ENCODE measurements at regions of chr6 and their contacts with region 1.

Region 1: GRCh38 chr6:71698703-71699102 is 187.6 kb upstream of the RIMS1 start:
- DNase-seq: no peak
- H3K4me3 ChIP-seq: no peak overlapping the region
- H3K27ac ChIP-seq: no peak overlapping the region
- H3K4me1 ChIP-seq: no peaks in the 10 kb centered on the region
- H3K27me3 ChIP-seq: no peaks in the 10 kb centered on the region
- CTCF ChIP-seq: no peak
- POLR2A ChIP-seq: no peak

Region 2: GRCh38 chr6:71727632-71728294 is 29.1 kb after region 1 on chr6:
- intact Hi-C with region 1: no loop called
- DNase-seq: no peak
- H3K4me3 ChIP-seq: no peak overlapping the region
- H3K27ac ChIP-seq: no peak overlapping the region
- H3K4me1 ChIP-seq: no peaks in the 10 kb centered on the region
- H3K27me3 ChIP-seq: no peaks in the 10 kb centered on the region
- CTCF ChIP-seq: no peak
- POLR2A ChIP-seq: no peak

Region 3: DNA sequence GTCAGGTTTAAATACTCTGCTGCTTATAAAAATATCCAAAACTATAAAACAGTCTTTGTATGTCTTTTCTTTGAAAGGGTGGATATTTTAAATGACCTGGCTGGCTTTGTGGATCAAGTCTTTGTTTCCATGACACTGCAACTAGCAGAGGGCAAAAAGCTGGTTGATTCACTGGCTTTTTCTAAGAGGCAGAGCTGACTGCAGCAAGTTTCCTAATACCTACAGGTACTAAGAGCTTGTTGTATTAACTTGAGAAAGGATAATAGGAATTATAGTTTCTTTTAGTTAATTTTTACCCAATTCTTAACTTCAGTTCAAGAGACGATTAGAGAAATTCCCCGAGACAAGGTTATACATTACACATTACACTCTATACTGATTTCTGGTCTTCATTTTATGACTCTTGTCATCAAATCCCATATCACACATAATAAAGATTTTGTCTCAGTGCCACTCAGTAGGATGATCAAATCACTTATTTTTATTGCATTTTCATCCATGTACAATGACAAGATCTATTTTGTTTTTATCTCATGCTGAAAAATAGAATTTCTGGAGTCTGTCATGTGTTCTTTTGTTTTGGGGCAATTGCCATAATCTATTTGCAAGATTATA is 67.5 kb after region 1 on chr6:
- intact Hi-C with region 1: loop called (anchors 5 kb)
- DNase-seq: no peak
- H3K4me3 ChIP-seq: no peak overlapping the region
- H3K27ac ChIP-seq: no peak overlapping the region
- H3K4me1 ChIP-seq: no peaks in the 10 kb centered on the region
- H3K27me3 ChIP-seq: no peaks in the 10 kb centered on the region
- CTCF ChIP-seq: no peak
- POLR2A ChIP-seq: no peak

Region 4: GRCh38 chr6:72002415-72002814 is 303.7 kb after region 1 on chr6:
- intact Hi-C with region 1: no loop called
- DNase-seq: no peak
- H3K4me3 ChIP-seq: no peak overlapping the region
- H3K27ac ChIP-seq: no peak overlapping the region
- H3K4me1 ChIP-seq: no peaks in the 10 kb centered on the region
- H3K27me3 ChIP-seq: no peaks in the 10 kb centered on the region
- CTCF ChIP-seq: no peak
- POLR2A ChIP-seq: no peak